Right ventricle myocardium inferior (tissue), 1 donor: ENCODE measurements at regions of chr10 and their contacts with region 1.

Region 1: GRCh38 chr10:119650692-119651513 is at the start of gene BAG3:
- DNase-seq: peak; percentile 97
- ATAC-seq: peak; percentile 94
- total RNA-seq, gene BAG3: 152 TPM

Region 2: DNA sequence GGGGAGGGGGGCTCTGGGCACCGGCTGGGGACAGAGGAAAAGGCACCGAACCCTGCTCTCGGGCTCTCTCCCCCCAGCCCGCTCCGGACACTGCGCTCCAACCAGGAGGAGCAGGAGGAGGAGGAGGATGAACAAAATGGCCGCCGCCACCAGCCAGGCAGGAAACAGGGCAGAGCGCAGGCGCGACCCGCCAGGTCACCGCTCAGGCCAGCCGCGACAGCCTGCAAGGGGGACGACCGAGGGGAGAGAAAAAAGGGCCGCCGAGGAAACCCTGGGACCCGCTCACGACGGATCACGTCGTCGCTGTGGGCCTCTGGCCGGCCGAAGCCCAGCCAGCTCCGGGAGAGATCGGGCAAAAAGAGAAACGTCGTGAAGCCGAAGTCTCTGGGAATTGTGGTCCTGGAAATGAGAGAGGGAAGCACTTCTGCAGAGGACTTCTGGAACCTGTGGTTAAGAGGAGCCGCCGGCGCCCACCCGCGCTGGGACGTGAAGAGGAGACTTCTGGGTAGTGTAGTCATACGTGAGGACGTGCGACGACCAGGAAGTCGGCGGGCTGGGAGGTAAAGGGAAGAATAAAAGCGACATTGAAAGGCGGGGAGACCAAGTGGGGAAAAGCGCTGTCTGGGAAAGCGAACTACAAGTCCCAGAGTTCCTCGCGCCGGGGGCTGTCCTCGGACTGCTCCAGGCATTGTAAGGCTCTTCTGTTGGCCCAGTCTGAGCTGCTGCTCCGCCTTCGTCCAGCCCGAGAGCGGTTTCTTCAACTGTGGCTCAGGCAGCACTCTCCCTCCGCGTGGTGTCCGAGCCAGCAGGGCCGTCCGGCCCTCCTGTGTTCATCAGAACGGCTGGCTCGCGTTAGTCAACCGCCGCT is 54.1 kb before region 1 on chr10 and contains the start of gene TIAL1:
- intact Hi-C with region 1: loop called (anchors 2 kb)
- DNase-seq: peak; percentile 99
- ATAC-seq: peak; percentile 97
- total RNA-seq, gene TIAL1: 74.0 TPM

Region 3: DNA sequence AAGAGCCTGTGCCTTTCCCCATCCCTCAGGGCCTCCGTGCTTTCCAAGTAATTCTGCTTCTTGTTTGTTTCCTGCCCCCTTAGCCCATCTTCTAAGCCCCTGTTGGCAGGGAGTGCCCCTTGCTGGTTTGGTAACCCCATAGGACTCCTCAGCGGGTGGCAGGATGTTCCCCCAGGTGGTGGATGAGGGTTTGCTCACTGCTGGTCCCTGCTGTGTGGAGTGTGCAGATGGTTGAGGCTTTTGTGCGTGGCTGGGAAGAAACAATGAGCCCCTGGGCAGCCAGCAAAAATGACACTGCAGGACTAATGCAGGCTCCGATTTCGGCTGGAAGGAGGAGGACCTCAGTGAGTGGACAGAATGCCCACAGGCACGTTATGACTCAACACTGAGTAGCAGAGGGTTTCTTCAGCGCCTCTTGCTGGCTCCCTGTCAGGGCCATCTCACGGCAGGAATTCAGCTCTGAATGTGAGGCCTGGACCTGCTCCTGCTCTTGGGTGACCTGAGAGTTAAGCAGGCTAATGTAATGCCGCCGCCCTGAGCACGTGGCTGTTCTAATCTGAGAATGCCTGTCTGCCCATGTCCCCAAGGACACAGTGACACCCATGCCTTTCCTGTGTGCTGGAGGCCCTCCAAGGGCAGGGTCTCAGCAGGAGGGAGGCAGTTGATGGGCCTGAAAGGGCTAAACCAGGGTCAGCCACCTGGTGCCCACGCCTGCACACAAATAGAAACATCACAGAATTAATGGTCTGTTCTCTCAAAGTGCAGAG is 16.8 kb after region 1 on chr10:
- intact Hi-C with region 1: loop called (anchors 2 kb)
- DNase-seq: peak; percentile 83
- ATAC-seq: peak; percentile 89